ENCODE measurements at regions of chr5 and their contacts with region 1.

Region 1: GRCh38 chr5:167723254-167723871 is 568.1 kb upstream of the WWC1 start:
- DNase-seq: no peak
- H3K4me3 ChIP-seq: no peak overlapping the region
- CTCF ChIP-seq: peak; percentile 72

Region 2: DNA sequence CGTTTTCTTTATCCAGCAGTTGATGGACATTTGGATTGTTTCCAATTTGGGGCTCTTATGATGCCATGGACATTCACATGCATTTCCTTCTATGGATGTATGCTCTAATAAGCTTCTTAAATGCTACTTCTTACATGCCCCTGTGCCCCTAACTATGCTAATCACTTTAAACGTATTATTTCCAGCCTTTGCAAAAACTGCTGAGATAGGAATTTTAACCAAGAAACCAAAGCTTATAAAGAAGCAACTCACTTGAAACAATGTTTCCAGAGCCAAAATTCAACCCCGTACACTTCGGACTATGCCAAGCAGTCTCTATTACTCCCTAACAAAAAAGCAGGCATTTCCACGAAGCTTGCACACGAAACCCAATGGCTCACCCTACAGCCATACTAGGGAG is 22.5 kb after region 1 on chr5:
- CTCF ChIA-PET with region 1: interaction called, 15 read pairs
- POLR2A ChIA-PET with region 1: no interaction called
- DNase-seq: no peak
- H3K4me3 ChIP-seq: no peak overlapping the region
- CTCF ChIP-seq: no peak

Region 3: GRCh38 chr5:167770461-167770860 is 47.1 kb after region 1 on chr5:
- CTCF ChIA-PET with region 1: interaction called, 13 read pairs
- POLR2A ChIA-PET with region 1: no interaction called
- DNase-seq: peak; percentile 92
- H3K4me3 ChIP-seq: no peak overlapping the region
- CTCF ChIP-seq: no peak

Measured in AG04449 (cell line).